HepG2 (cell line): ENCODE measurements at regions of chr13 and their contacts with region 1.

Region 1: DNA sequence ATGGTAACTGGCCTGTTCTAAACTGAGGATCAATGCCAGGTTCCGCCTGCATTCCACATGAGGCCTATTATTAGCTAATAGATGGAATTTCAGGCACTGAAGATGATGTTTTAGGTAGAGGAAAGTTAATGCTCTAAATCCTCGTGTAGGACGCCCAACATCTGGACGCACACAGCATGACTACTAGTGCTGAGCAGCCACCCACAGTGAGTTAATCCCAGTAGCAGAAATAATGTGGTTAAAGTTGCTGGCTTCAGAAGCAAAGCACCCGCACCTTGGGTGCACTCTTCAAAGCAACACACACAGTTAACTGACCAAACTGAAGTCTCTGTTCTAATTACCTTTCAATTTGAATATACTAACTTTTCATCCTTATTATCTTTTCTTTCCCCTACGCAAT is 150.6 kb downstream of the DIAPH3 start:
- DNase-seq: no peak
- ATAC-seq: no peak
- H3K4me3 ChIP-seq: no peak overlapping the region
- H3K27ac ChIP-seq: no peak overlapping the region
- H3K4me1 ChIP-seq: no peaks in the 10 kb centered on the region
- H3K27me3 ChIP-seq: no peaks in the 10 kb centered on the region
- CTCF ChIP-seq: no peak
- EP300 ChIP-seq: no peak
- POLR2A ChIP-seq: no peak
- RAD21 ChIP-seq: no peak

Region 2: DNA sequence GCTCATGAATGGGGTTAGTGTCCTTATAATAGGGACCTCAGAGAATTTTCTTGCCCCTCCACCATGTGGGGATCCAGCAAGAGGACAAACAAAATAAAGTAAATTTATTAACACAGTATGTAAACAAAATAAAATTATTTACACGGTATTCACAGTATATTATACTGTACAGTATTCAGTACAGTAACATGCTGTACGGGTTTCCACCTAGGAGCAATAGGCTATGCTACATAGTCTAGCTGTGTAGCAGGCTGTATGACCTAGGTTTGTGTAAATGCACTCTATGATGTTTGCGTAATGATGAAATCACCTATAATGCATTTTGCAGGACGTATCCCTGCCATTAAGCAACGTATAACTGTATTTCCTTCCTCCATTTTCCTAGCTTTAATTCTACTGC is 162.4 kb after region 1 on chr13:
- CTCF ChIA-PET with region 1: no interaction called
- POLR2A ChIA-PET with region 1: no interaction called
- in situ Hi-C with region 1: no loop called
- intact Hi-C with region 1: loop called (anchors 1 kb)
- DNase-seq: no peak
- ATAC-seq: peak; percentile 47; the same call in 2 of the 3 replicates
- H3K4me3 ChIP-seq: no peak overlapping the region
- H3K27ac ChIP-seq: no peak overlapping the region
- H3K4me1 ChIP-seq: peaks cover 11% of the 10 kb centered on the region
- H3K27me3 ChIP-seq: peaks cover 0 to 5% of the 10 kb centered on the region in 2 experiments; a peak in 2 of 5 replicates
- CTCF ChIP-seq: no peak
- EP300 ChIP-seq: no peak
- POLR2A ChIP-seq: no peak
- RAD21 ChIP-seq: no peak